CD14-positive monocyte (primary cell): ENCODE measurements at regions of chr14 and their contacts with region 1.

Region 1: DNA sequence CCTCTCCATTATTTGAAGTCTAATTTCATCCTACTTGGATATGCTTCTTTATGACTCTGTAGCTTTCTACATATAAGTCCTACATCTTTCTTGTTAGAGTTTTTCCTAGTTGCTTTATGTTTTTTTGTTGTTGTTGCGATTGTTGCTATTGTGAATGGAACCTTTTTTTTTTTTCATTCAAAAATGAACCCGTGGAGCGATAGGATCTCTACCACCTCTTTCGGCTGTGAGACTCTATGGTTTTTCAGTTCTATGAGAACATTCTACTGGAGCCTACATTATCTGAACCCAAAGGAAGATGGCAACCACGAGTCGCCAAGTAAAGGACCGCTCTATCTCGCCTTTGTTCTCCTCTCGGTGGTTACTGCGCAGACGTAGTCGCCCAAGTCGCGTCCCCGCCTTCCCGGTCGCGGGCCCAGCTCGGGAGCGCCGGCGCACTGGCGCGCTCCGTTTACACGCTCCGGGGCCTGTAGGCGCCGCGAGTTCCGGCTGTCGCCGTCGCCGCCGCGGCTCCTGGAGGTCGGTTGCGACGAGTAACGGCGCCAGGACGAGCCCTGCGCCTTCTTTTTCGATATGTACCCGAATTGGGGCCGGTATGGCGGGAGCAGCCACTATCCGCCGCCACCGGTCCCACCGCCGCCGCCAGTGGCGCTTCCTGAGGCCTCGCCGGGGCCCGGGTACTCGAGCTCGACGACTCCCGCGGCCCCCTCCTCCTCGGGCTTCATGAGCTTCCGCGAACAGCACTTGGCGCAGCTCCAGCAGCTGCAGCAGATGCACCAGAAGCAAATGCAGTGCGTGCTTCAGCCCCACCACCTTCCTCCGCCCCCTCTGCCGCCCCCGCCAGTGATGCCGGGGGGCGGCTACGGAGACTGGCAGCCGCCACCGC is at the start of gene YLPM1:
- DNase-seq: peak; percentile 91 to 95 (median 93)
- H3K4me3 ChIP-seq: peak within 1 kb of the TSS; percentile 64 to 92 (median 89)
- H3K4me3 Mint-ChIP-seq: peak within 1 kb of the TSS; percentile 91 to 98
- H3K27ac ChIP-seq: peak within 1 kb of the TSS; percentile 73 to 93
- H3K27ac Mint-ChIP-seq: peak within 1 kb of the TSS; percentile 35 to 96 (median 89)
- H3K4me1 ChIP-seq: peaks cover 29 to 39% of the 10 kb centered on the region in 2 donors
- H3K4me1 Mint-ChIP-seq: peaks cover 46% of the 10 kb centered on the region
- H3K27me3 ChIP-seq: no peaks in the 10 kb centered on the region
- H3K27me3 Mint-ChIP-seq: peaks cover 0 to 3% (median 0%) of the 10 kb centered on the region in 3 donors
- CTCF ChIP-seq: peak; percentile 63
- polyA plus RNA-seq, gene YLPM1: 2.9 to 19.2 (median 6.2) TPM

Region 2: DNA sequence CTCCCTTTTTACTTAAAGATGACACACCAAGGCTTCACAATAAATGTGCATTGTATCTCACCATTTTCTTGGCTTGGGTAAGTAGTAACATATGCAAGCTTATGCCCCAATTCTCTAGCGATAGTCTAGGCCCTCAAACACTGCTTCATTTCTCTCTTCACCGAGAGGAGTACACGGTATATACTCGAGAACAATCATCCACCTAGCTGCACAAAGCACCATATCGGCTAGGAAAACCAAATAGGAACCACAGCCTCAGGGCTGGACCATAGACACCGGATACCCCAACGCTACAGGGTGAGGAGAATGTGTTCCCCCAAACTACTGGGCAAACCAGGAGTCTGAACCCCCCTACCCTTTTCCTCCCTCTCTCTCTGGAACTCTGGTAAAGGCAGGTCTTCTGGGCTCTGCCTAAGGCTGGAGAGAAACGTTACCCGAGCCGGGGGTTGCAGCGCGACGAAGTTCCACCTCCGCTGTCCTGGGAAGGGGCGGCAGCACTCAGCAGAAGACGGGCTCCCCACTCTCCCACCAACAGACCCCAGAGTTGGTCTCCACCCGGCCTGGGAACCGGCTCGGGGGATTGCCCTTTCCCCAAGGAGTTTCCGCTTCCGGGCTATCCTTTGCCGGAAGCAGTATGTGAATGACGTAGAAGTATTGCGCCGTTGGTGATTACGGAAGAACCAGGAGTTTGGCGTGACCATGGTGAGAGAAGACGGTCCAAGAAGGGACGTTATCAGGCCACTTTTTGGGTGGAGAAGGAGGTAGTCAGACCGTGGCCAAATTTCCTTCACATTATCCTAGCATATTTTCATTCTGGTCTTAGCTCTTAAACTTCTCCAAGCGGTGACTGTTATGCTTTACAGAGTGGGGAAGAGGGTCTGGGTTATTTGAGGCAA is 50.4 kb before region 1 on chr14 and contains the starts of genes AREL1 and FCF1:
- intact Hi-C with region 1: loop called (anchors 2 to 10 kb)
- DNase-seq: peak; percentile 91 to 96 (median 94)
- H3K4me3 ChIP-seq: peak within 1 kb of the TSS; percentile 92 to 95 (median 94)
- H3K4me3 Mint-ChIP-seq: peak within 1 kb of the TSS; percentile 92 to 97
- H3K27ac ChIP-seq: peak within 1 kb of the TSS; percentile 78 to 97
- H3K27ac Mint-ChIP-seq: peak within 1 kb of the TSS; percentile 97 to 100 (median 98)
- H3K4me1 ChIP-seq: peaks cover 19 to 27% of the 10 kb centered on the region in 2 donors
- H3K4me1 Mint-ChIP-seq: peaks cover 31% of the 10 kb centered on the region
- H3K27me3 ChIP-seq: no peaks in the 10 kb centered on the region
- H3K27me3 Mint-ChIP-seq: peaks cover 0 to 2% (median 0%) of the 10 kb centered on the region in 3 donors
- CTCF ChIP-seq: no peak
- polyA plus RNA-seq, gene AREL1: 12.5 to 23.3 (median 20.0) TPM
- polyA plus RNA-seq, gene FCF1: 14.8 to 22.6 (median 17.5) TPM

Region 3: DNA sequence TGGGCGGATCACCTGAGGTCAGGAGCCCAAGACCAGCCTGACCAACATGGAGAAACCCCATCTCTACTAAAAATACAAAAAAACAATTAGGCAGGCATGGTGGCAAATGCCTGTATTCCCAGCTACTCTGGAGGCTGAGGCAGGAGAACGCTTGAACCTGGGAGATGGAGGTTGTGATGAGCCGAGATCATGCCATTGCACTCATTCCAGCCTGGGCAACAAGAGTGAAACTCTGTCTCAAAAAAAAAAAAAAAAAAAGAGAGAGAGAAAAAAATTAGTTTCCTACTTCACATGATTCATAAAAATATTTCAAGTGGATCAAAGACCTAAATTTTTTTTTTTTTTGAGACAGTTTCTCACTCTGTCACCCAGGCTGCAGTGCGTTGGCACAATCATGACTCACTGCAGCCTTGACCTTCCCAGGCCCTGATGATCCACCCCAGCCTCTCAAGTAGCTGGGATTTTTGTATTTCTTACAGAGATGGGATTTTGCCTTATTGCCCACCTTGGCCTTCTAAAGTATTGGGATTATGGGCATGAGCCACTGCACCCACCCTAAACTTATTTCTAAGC is 25.3 kb before region 1 on chr14:
- intact Hi-C with region 1: no loop called
- DNase-seq: no peak
- H3K4me3 ChIP-seq: no peak overlapping the region
- H3K4me3 Mint-ChIP-seq: no peak overlapping the region
- H3K27ac ChIP-seq: no peak overlapping the region
- H3K27ac Mint-ChIP-seq: no peak overlapping the region
- H3K4me1 ChIP-seq: no peaks in the 10 kb centered on the region
- H3K4me1 Mint-ChIP-seq: no peaks in the 10 kb centered on the region
- H3K27me3 ChIP-seq: no peaks in the 10 kb centered on the region
- H3K27me3 Mint-ChIP-seq: peaks cover 0 to 2% (median 0%) of the 10 kb centered on the region in 3 donors
- CTCF ChIP-seq: no peak